Activated CD4-positive, alpha-beta T cell treated with anti-CD3 and anti-CD28 coated beads for 36 hours (primary cell): ENCODE measurements at regions of chr16 and their contacts with region 1.

Region 1: GRCh38 chr16:71461686-71462648 is at the start of gene ZNF23:
- DNase-seq: peak; percentile 88
- ATAC-seq: peak; percentile 96
- H3K4me3 Mint-ChIP-seq: peak within 1 kb of the TSS; percentile 76
- H3K27ac Mint-ChIP-seq: peak within 1 kb of the TSS; percentile 96
- H3K4me1 Mint-ChIP-seq: peaks cover 19% of the 10 kb centered on the region
- H3K27me3 Mint-ChIP-seq: no peaks in the 10 kb centered on the region
- total RNA-seq, gene ZNF23: 9.6 to 10.9 TPM

Region 2: GRCh38 chr16:71288890-71289733 is 172.9 kb before region 1 on chr16 and contains the start of gene CMTR2:
- CTCF ChIA-PET with region 1: no interaction called
- POLR2A ChIA-PET with region 1: no interaction called
- intact Hi-C with region 1: loop called in 1 of 2 experiments (anchors 5 kb)
- DNase-seq: peak; percentile 95
- ATAC-seq: peak; percentile 97
- H3K4me3 Mint-ChIP-seq: peak within 1 kb of the TSS; percentile 83
- H3K27ac Mint-ChIP-seq: peak within 1 kb of the TSS; percentile 90
- H3K4me1 Mint-ChIP-seq: peaks cover 15% of the 10 kb centered on the region
- H3K27me3 Mint-ChIP-seq: peaks cover 16% of the 10 kb centered on the region
- total RNA-seq, gene CMTR2: 15.8 to 16.5 TPM